HCT116 (cell line): ENCODE measurements at regions of chr12 and their contacts with region 1.

Region 1: DNA sequence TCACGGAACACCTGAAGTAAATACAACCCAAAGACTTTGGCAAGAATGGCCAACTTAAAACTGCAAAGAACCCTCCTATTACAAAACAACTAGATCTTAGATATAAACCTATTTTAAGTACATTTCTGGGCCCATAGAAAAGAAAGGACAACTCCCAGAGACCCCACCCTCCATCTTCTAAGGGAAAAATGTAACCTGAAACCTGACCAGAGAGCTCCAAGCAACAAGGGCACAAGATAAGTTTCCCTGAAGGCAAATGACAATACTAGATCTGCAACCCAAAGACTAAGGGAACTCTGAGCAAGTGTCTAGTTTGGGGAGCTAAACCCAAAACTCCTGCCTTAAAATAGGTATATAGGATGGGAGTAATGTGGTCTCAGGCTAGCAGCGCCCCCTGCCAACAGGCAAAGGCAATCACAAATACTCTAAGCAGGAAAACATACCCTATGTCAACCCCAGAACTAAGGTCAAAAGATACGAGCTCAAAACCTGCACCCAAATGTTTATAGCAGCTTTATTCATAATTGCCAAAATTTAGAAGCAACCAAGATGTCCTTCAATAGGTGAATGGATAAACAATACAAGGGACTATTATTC is 218.9 kb downstream of the ITPR2 start:
- DNase-seq: peak; percentile 8
- ATAC-seq: peak; percentile 79
- H3K4me3 ChIP-seq: no peak overlapping the region
- H3K27ac ChIP-seq: no peak overlapping the region
- H3K4me1 ChIP-seq: no peaks in the 10 kb centered on the region
- H3K27me3 ChIP-seq: no peaks in the 10 kb centered on the region
- CTCF ChIP-seq: peak; percentile 51 to 79 (median 76); a peak in 5 of 6 replicates
- POLR2A ChIP-seq: no peak
- RAD21 ChIP-seq: peak; percentile 66

Region 2: DNA sequence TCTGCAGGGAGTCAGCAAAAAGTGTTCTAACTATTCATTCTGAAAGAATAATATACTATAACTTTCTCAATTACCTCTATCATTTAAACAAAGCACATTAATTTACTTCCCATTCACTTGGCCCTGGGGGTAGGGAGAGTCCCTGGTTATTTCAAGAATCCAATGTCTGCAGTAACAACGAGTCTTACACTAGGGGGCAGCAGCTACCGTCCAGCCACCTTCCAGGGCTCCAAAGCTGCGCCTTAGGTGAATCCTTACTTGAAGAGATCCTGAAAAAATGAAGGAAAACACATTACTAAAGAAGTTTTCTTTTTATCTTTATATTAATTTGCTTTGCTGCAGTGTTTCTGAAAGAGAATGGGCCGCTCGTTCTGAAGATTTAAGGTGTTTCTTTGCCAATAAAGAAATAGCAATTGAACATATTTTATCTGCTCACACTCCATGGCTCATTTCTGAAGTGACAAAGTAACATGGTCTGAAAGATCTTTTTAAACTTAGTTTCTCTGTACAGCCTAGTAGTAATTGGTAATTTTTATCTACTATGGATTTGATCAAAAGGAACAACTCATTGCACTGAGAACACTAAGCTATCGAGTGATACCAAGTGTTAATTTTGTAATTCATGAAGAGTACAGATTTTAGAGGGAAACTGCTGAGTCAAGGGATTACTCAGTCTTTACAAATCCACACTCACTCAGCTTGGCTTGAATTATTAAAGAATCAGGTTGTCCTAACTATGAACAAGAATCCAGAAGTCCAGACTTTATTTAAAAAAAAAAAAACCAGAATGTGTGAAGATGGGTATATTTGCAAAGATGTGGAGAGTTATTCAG is 516.9 kb before region 1 on chr12:
- CTCF ChIA-PET with region 1: interaction called, 10 read pairs
- POLR2A ChIA-PET with region 1: no interaction called
- RAD21 ChIA-PET with region 1: no interaction called
- intact Hi-C with region 1: loop called (anchors 1 kb)
- DNase-seq: peak; percentile 53
- ATAC-seq: peak; percentile 99
- H3K4me3 ChIP-seq: no peak overlapping the region
- H3K27ac ChIP-seq: no peak overlapping the region
- H3K4me1 ChIP-seq: peaks cover 9 to 12% of the 10 kb centered on the region in 2 experiments; a peak in 3 of 4 replicates
- H3K27me3 ChIP-seq: no peaks in the 10 kb centered on the region
- CTCF ChIP-seq: peak; percentile 79 to 94 (median 87)
- POLR2A ChIP-seq: no peak
- RAD21 ChIP-seq: peak; percentile 92

Region 3: GRCh38 chr12:26119391-26119981 is 494.6 kb before region 1 on chr12:
- CTCF ChIA-PET with region 1: interaction called, 14 read pairs
- POLR2A ChIA-PET with region 1: no interaction called
- RAD21 ChIA-PET with region 1: no interaction called
- intact Hi-C with region 1: loop called (anchors 1 kb)
- DNase-seq: peak; percentile 51
- ATAC-seq: peak; percentile 58
- H3K4me3 ChIP-seq: no peak overlapping the region
- H3K27ac ChIP-seq: no peak overlapping the region
- H3K4me1 ChIP-seq: peaks cover 13 to 38% of the 10 kb centered on the region in 2 experiments
- H3K27me3 ChIP-seq: peaks cover 5% of the 10 kb centered on the region; the same call in 1 of the 2 replicates
- CTCF ChIP-seq: peak; percentile 53 to 75 (median 62)
- POLR2A ChIP-seq: no peak
- RAD21 ChIP-seq: peak; percentile 77

Region 4: DNA sequence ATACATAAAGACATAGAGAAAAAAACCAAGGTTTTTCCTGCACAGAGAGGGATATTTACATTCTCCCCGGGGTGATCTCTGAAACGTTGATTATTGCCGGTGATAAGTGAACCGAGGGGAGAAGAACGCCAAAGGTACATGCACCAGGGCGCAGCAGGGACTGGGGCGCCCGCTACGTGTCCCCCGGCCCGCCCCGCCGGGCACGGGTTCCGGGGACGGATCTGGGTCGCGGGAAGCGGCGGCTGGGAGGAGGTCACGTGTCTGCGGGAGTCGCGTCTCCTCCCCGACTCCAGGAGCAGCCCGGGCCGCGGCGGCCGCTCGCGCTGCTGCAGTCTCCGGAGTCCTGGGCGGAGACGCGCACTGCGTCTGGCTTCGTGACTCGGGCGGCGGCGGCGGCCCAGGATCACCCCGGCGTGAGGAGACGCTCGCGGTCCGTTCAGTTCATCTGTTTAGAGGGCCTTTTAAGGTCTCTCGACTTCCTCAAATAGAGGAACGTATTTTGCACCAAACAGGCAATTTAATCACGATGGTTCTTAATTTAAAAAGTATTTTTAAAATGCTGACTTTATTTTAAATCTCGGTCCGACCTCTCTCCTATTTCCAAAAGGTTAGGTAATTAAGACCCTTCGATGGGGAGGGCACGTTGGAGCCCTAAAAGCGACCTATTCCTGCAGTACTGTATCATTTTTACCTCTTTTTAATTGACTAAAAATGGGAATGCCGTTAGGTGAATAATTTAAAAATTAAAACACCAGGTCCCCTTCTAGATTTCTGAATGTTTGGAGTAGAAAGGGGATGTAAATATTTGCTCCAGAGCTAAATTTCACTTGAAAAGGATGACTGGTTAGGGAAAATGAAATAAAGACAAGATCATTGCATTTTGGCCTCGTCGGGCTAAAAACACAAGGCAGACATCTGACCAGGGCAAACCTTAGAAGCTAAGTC is 487.5 kb before region 1 on chr12:
- CTCF ChIA-PET with region 1: interaction called, 14 read pairs
- POLR2A ChIA-PET with region 1: no interaction called
- RAD21 ChIA-PET with region 1: no interaction called
- intact Hi-C with region 1: no loop called
- DNase-seq: no peak
- ATAC-seq: peak; percentile 76
- H3K4me3 ChIP-seq: peak overlapping the region; percentile 50 to 66
- H3K27ac ChIP-seq: peak overlapping the region; percentile 73
- H3K4me1 ChIP-seq: peaks cover 13 to 40% of the 10 kb centered on the region in 2 experiments
- H3K27me3 ChIP-seq: peaks cover 11% of the 10 kb centered on the region; the same call in 1 of the 2 replicates
- CTCF ChIP-seq: no peak
- POLR2A ChIP-seq: peak; percentile 9
- RAD21 ChIP-seq: no peak

Region 5: GRCh38 chr12:26434299-26435068 is 179.6 kb before region 1 on chr12:
- CTCF ChIA-PET with region 1: interaction called, 3 read pairs
- POLR2A ChIA-PET with region 1: no interaction called
- RAD21 ChIA-PET with region 1: no interaction called
- intact Hi-C with region 1: loop called (anchors 2 kb)
- DNase-seq: peak; percentile 61
- ATAC-seq: peak; percentile 92
- H3K4me3 ChIP-seq: no peak overlapping the region
- H3K27ac ChIP-seq: no peak overlapping the region
- H3K4me1 ChIP-seq: no peaks in the 10 kb centered on the region
- H3K27me3 ChIP-seq: no peaks in the 10 kb centered on the region
- CTCF ChIP-seq: peak; percentile 72 to 91 (median 87)
- POLR2A ChIP-seq: no peak
- RAD21 ChIP-seq: peak; percentile 75

Region 6: GRCh38 chr12:26878661-26879119 is 264.6 kb after region 1 on chr12:
- CTCF ChIA-PET with region 1: no interaction called
- POLR2A ChIA-PET with region 1: no interaction called
- RAD21 ChIA-PET with region 1: no interaction called
- intact Hi-C with region 1: no loop called
- DNase-seq: no peak
- ATAC-seq: no peak
- H3K4me3 ChIP-seq: no peak overlapping the region
- H3K27ac ChIP-seq: no peak overlapping the region
- H3K4me1 ChIP-seq: no peaks in the 10 kb centered on the region; a peak in 1 of 4 replicates
- H3K27me3 ChIP-seq: no peaks in the 10 kb centered on the region
- CTCF ChIP-seq: no peak
- POLR2A ChIP-seq: no peak
- RAD21 ChIP-seq: no peak